H1 (cell line): ENCODE measurements at regions of chr9 and their contacts with region 1.

Region 1: GRCh38 chr9:123375469-123376132 is 19.6 kb downstream of the CRB2 start:
- DNase-seq: no peak
- H3K4me3 ChIP-seq: no peak overlapping the region
- H3K27ac ChIP-seq: no peak overlapping the region
- H3K4me1 ChIP-seq: peaks cover 0 to 15% (median 8%) of the 10 kb centered on the region in 4 experiments; a peak in 6 of 7 replicates
- H3K27me3 ChIP-seq: peaks cover 0 to 31% (median 22%) of the 10 kb centered on the region in 4 experiments; a peak in 5 of 7 replicates
- CTCF ChIP-seq: no peak
- EP300 ChIP-seq: no peak
- POLR2A ChIP-seq: no peak
- RAD21 ChIP-seq: no peak

Region 2: DNA sequence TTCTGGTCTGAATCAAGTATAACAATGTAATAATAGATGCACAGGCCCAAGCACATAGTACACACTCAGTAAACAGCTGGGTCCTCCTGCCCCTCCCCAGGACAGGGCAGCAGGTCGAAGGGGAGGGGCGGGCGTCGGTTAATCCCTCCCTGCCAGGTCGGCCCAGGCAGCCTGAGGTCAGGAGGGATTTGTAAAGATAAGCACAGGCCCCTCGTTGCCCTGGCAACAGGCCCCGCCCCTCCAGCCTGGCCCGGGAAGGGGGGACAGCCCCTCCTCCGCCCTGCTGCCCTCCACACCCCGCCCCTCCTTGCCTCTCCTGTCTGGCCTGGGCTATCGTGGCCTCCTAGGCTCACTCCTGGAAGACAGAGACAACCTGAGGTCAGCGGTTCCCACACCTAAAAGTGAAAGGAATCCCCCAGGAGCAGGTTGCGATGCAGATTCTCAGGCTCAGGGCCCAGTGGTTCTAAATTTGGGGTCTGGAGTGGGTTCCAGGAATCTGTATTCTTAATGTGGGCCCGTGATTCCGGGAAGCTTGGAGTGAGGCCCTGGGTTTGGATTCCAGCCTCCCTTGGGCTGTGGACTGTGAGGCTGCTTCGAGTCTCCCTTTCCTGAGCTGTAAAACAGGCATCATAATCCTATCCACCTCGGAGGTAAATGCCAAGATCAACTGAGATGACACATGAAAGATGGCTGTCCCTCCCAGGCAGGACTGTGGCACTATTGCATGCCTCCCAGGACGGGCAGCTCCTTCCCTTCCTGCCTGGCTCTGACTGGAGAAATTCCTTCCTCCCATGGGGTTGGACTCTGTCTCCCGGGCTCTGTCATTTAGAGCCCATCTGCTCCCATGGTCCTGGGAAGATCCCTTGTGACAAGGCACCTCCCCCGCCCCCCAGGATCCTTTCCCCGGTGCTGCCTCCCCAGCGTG is 15.2 kb before region 1 on chr9:
- CTCF ChIA-PET with region 1: interaction called, 668 read pairs
- POLR2A ChIA-PET with region 1: interaction called, 19 read pairs
- DNase-seq: peak; percentile 91 to 100
- H3K4me3 ChIP-seq: peak overlapping the region in 1 of 4 experiments; percentile 24; a peak in 1 of 8 replicates
- H3K27ac ChIP-seq: no peak overlapping the region
- H3K4me1 ChIP-seq: peaks cover 17 to 47% (median 37%) of the 10 kb centered on the region in 4 experiments
- H3K27me3 ChIP-seq: no peaks in the 10 kb centered on the region; a peak in 1 of 7 replicates
- CTCF ChIP-seq: no peak
- EP300 ChIP-seq: no peak
- POLR2A ChIP-seq: no peak
- RAD21 ChIP-seq: no peak

Region 3: DNA sequence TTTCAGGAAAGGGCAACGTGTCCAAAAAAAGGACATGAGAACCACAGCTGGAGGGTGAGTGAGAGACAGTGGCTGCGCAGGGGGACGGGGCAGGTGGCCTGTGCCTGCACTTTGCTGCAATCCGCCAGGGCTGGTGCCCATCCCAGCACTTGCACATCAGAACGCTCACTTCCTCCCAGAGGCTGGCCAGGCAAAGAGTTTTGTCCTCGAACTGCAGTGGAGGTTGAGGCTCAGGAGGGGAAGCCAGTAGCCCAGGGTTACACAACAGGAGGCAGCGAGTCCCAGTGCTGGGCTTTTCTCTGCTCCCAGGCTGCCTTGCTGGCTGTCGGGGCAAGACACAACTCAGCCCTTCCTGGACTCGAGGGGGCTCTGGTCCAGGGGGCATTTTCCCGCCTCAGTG is 13.5 kb after region 1 on chr9:
- CTCF ChIA-PET with region 1: interaction called, 28 read pairs
- POLR2A ChIA-PET with region 1: interaction called, 4 read pairs
- DNase-seq: no peak
- H3K4me3 ChIP-seq: no peak overlapping the region
- H3K27ac ChIP-seq: no peak overlapping the region
- H3K4me1 ChIP-seq: peaks cover 0 to 8% (median 5%) of the 10 kb centered on the region in 4 experiments; a peak in 5 of 7 replicates
- H3K27me3 ChIP-seq: no peaks in the 10 kb centered on the region; a peak in 1 of 7 replicates
- CTCF ChIP-seq: no peak
- EP300 ChIP-seq: no peak
- POLR2A ChIP-seq: no peak
- RAD21 ChIP-seq: no peak